Activated naive CD8-positive, alpha-beta T cell treated with anti-CD3 and anti-CD28 coated beads, Interleukin-2, amount 10 ng/mL, durations not matched to agents 7 days and 5 days (primary cell): ENCODE measurements at regions of chr2 and their contacts with region 1.

Region 1: DNA sequence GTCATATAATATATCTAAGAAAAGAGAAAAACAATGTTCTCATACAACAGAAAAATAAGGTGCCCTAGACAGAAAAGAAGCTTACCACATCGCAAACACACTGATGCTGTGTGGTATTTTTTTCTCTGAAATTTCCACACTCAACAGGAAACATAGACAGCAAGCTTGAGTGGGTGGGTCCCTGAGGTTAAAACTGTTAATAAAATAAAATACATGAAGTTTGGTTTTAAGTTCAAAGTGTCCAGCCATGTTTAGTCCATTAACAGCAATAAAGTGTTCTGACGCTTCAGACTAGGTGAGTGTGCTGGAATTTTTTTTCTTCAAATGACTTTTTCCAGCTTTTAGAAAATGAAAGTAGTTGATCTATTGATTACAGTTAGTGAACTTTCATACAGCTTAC is 83.3 kb upstream of the EPB41L5 start:
- DNase-seq: no peak
- ATAC-seq: peak; percentile 95
- H3K4me3 Mint-ChIP-seq: peak overlapping the region; percentile 89
- H3K27ac Mint-ChIP-seq: peak overlapping the region; percentile 88
- H3K4me1 Mint-ChIP-seq: peaks cover 48% of the 10 kb centered on the region
- H3K27me3 Mint-ChIP-seq: no peaks in the 10 kb centered on the region

Region 2: GRCh38 chr2:119759451-119760236 is 169.9 kb before region 1 on chr2 and contains the start of gene PTPN4:
- POLR2A ChIA-PET with region 1: interaction called, 15 read pairs
- DNase-seq: peak; percentile 94
- ATAC-seq: peak; percentile 96
- H3K4me3 Mint-ChIP-seq: peak within 1 kb of the TSS; percentile 90
- H3K27ac Mint-ChIP-seq: peak within 1 kb of the TSS; percentile 90
- H3K4me1 Mint-ChIP-seq: peaks cover 28% of the 10 kb centered on the region
- H3K27me3 Mint-ChIP-seq: no peaks in the 10 kb centered on the region
- total RNA-seq, gene PTPN4: 102 to 109 TPM